Activated T-helper 1 cell treated with anti-CD3 and anti-CD28 coated beads, Interleukin-12 subunit alpha, Interleukin-12 subunit beta, Interleukin-2, Interleukin-4 antibody, amounts not matched to agents 30 ng/mL and 10 ng/mL and 1 ng/mL, durations not matched to agents 14 hours and 24 hours and 36 hours (primary cell): ENCODE measurements at regions of chr18 and their contacts with region 1.

Region 1: GRCh38 chr18:21600526-21601410 is at the start of gene ESCO1:
- DNase-seq: peak; percentile 94
- H3K4me3 Mint-ChIP-seq: peak within 1 kb of the TSS; percentile 94
- H3K27ac Mint-ChIP-seq: peak within 1 kb of the TSS; percentile 99
- H3K4me1 Mint-ChIP-seq: peaks cover 20% of the 10 kb centered on the region
- H3K27me3 Mint-ChIP-seq: no peaks in the 10 kb centered on the region
- total RNA-seq, gene ESCO1: 20.7 and 21.5 TPM in 2 replicates

Region 2: GRCh38 chr18:21489119-21489750 is 111.5 kb before region 1 on chr18:
- intact Hi-C with region 1: loop called (anchors 1 kb)
- DNase-seq: no peak
- H3K4me3 Mint-ChIP-seq: no peak overlapping the region
- H3K27ac Mint-ChIP-seq: no peak overlapping the region
- H3K4me1 Mint-ChIP-seq: no peaks in the 10 kb centered on the region
- H3K27me3 Mint-ChIP-seq: no peaks in the 10 kb centered on the region

Region 3: GRCh38 chr18:21612125-21612991 is 11.6 kb after region 1 on chr18 and contains the start of gene SNRPD1:
- intact Hi-C with region 1: loop called (anchors 1 kb)
- DNase-seq: peak; percentile 89
- H3K4me3 Mint-ChIP-seq: peak within 1 kb of the TSS; percentile 96
- H3K27ac Mint-ChIP-seq: peak within 1 kb of the TSS; percentile 98
- H3K4me1 Mint-ChIP-seq: peaks cover 18% of the 10 kb centered on the region
- H3K27me3 Mint-ChIP-seq: no peaks in the 10 kb centered on the region
- total RNA-seq, gene SNRPD1: 170 and 173 TPM in 2 replicates

Region 4: GRCh38 chr18:21636769-21637168 is 36.0 kb after region 1 on chr18:
- intact Hi-C with region 1: no loop called
- DNase-seq: no peak
- H3K4me3 Mint-ChIP-seq: no peak overlapping the region
- H3K27ac Mint-ChIP-seq: no peak overlapping the region
- H3K4me1 Mint-ChIP-seq: peaks cover 7% of the 10 kb centered on the region
- H3K27me3 Mint-ChIP-seq: no peaks in the 10 kb centered on the region

Region 5: GRCh38 chr18:21682371-21683051 is 81.7 kb after region 1 on chr18:
- intact Hi-C with region 1: loop called (anchors 1 kb)
- DNase-seq: peak; percentile 17
- H3K4me3 Mint-ChIP-seq: no peak overlapping the region
- H3K27ac Mint-ChIP-seq: no peak overlapping the region
- H3K4me1 Mint-ChIP-seq: peaks cover 14% of the 10 kb centered on the region
- H3K27me3 Mint-ChIP-seq: no peaks in the 10 kb centered on the region

Region 6: DNA sequence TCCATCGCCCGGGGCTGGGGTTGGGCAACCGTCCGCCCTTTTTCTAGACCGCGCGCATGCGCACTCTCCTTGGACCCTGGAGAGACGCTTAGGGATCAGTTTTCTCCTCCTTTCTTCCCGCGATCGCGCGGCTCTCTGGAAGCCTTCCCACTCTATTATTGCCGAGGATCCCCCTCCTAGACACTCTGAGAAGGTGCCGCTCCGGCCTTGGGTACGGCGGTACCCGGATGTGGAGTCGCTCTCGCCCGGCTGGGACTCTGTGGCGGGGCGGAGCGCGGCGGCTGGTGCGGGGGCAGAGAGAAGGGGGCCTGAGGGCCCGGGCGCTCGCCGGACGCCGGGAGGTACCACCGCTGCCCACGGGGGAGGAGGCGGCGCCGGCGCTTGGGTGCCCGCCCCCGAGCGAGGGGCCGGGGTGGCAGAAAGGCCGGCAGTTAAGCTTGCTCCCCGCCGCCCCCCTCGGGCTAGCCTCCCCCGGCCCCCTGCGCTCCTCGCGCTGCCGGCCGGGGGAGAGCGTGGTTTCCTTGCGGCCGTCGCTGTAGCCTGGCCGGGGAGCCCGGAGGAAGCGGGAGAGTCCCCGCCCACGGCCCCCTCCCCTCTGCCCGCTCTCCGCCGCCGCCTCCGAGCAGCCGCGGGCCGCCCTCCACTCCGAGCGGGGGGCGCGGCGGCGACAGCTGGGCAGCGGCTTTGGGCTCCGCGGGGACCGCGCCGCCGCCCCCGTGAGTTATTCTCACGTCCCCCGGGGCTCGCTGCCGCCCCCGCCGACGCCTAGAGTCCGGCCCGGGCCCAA is 140.1 kb after region 1 on chr18 and contains the start of gene MIB1:
- intact Hi-C with region 1: loop called (anchors 1 kb)
- DNase-seq: no peak
- H3K4me3 Mint-ChIP-seq: peak within 1 kb of the TSS; percentile 93
- H3K27ac Mint-ChIP-seq: peak within 1 kb of the TSS; percentile 94
- H3K4me1 Mint-ChIP-seq: peaks cover 45% of the 10 kb centered on the region
- H3K27me3 Mint-ChIP-seq: peaks cover 18% of the 10 kb centered on the region
- total RNA-seq, gene MIB1: 29.8 and 31.7 TPM in 2 replicates

Region 7: DNA sequence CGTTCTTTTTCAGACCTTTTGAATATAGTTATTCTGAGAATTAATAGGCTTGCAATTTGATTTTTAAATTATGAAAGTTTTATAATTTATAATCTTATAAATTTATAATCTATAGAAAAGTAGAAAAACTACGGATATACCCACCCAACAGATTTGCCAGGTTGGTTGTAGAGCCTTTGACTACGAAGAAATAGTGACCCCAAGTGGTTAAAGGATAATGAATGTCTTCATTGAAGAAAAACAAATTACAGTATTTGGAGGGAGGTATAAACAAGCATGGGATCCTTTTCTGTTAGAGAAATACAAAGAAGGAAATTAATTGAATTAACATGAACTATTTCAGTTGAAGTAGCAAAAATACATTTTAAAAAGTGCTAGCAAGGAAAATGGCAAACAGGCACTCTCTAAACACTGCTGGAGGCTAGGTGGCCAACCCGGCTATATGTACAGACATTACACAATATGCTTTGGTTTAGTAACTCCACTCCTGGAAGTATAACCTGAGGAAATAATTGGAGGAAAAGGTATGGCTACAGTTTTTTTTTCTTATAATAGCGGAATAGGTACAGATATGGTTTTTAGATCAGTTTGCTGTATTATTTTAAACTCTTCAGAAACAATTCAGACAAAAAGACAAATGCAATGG is 250.7 kb after region 1 on chr18:
- intact Hi-C with region 1: loop called (anchors 10 kb)
- DNase-seq: no peak
- H3K4me3 Mint-ChIP-seq: no peak overlapping the region
- H3K27ac Mint-ChIP-seq: no peak overlapping the region
- H3K4me1 Mint-ChIP-seq: peaks cover 12% of the 10 kb centered on the region
- H3K27me3 Mint-ChIP-seq: no peaks in the 10 kb centered on the region